H1 (cell line): ENCODE measurements at regions of chr10 and their contacts with region 1.

Region 1: GRCh38 chr10:83991986-83992753 is 147.1 kb upstream of the GHITM start:
- DNase-seq: peak; percentile 17 to 63
- H3K4me3 ChIP-seq: no peak overlapping the region
- H3K27ac ChIP-seq: no peak overlapping the region
- H3K4me1 ChIP-seq: no peaks in the 10 kb centered on the region
- H3K27me3 ChIP-seq: no peaks in the 10 kb centered on the region
- CTCF ChIP-seq: peak; percentile 55 to 64 (median 56)
- EP300 ChIP-seq: no peak
- POLR2A ChIP-seq: no peak
- RAD21 ChIP-seq: peak; percentile 52 to 68

Region 2: DNA sequence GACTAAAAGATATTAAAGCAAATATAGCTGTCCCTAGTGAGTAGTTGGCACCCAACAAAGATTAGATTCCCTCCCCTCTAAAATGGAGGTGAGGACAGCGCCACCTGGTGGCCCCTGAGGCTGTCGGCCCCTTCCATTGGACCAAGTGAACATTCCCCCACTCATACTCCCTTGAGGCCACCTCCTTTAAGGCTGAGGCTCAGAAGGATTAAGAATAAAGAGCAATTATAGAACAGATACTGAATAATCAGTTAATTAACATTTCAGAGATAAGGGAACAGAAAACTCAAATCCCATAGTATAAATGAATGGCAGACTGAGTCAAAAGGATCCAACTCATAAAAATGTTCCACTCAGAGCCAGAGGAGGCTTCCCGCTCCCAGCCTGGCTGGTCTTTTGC is 16.7 kb after region 1 on chr10:
- CTCF ChIA-PET with region 1: interaction called, 17 read pairs
- POLR2A ChIA-PET with region 1: interaction called, 4 read pairs
- DNase-seq: peak in 1 of 2 experiments; percentile 84
- H3K4me3 ChIP-seq: no peak overlapping the region
- H3K27ac ChIP-seq: no peak overlapping the region
- H3K4me1 ChIP-seq: peaks cover 0 to 4% (median 0%) of the 10 kb centered on the region in 4 experiments; a peak in 1 of 7 replicates
- H3K27me3 ChIP-seq: no peaks in the 10 kb centered on the region
- CTCF ChIP-seq: peak; percentile 65 to 94 (median 89)
- EP300 ChIP-seq: no peak
- POLR2A ChIP-seq: no peak
- RAD21 ChIP-seq: peak; percentile 63 to 67

Region 3: GRCh38 chr10:84076540-84077195 is 84.5 kb after region 1 on chr10:
- CTCF ChIA-PET with region 1: no interaction called
- POLR2A ChIA-PET with region 1: no interaction called
- DNase-seq: no peak
- H3K4me3 ChIP-seq: no peak overlapping the region
- H3K27ac ChIP-seq: no peak overlapping the region
- H3K4me1 ChIP-seq: peaks cover 0 to 4% (median under 1%) of the 10 kb centered on the region in 4 experiments; a peak in 2 of 7 replicates
- H3K27me3 ChIP-seq: no peaks in the 10 kb centered on the region; a peak in 2 of 7 replicates
- CTCF ChIP-seq: peak; percentile 54 to 71 (median 54)
- EP300 ChIP-seq: no peak
- POLR2A ChIP-seq: no peak
- RAD21 ChIP-seq: peak in 1 of 2 experiments; percentile 29; a peak in 1 of 4 replicates

Region 4: GRCh38 chr10:84097787-84098353 is 105.7 kb after region 1 on chr10:
- CTCF ChIA-PET with region 1: no interaction called
- POLR2A ChIA-PET with region 1: no interaction called
- DNase-seq: no peak
- H3K4me3 ChIP-seq: no peak overlapping the region
- H3K27ac ChIP-seq: no peak overlapping the region
- H3K4me1 ChIP-seq: no peaks in the 10 kb centered on the region
- H3K27me3 ChIP-seq: no peaks in the 10 kb centered on the region
- CTCF ChIP-seq: peak in 2 of 3 experiments; percentile 25 to 49; a peak in 2 of 4 replicates
- EP300 ChIP-seq: no peak
- POLR2A ChIP-seq: no peak
- RAD21 ChIP-seq: peak; percentile 53 to 67